ENCODE measurements at regions of chr12 and their contacts with region 1.

Region 1: GRCh38 chr12:7995266-7995963 is 37.1 kb upstream of the FOXJ2 start:
- DNase-seq: peak; percentile 73 to 91
- H3K4me3 ChIP-seq: no peak overlapping the region
- H3K27ac ChIP-seq: peak overlapping the region; percentile 10 to 77 (median 66)
- H3K4me1 ChIP-seq: peaks cover 0 to 34% (median 2%) of the 10 kb centered on the region in 4 donors
- H3K27me3 ChIP-seq: no peaks in the 10 kb centered on the region
- CTCF ChIP-seq: peak in 6 of 7 experiments; percentile 45 to 89 (median 81)
- EP300 ChIP-seq: no peak
- POLR2A ChIP-seq: no peak

Region 2: GRCh38 chr12:7583571-7583970 is 411.8 kb before region 1 on chr12:
- intact Hi-C with region 1: no loop called
- DNase-seq: no peak
- H3K4me3 ChIP-seq: no peak overlapping the region
- H3K27ac ChIP-seq: no peak overlapping the region
- H3K4me1 ChIP-seq: no peaks in the 10 kb centered on the region
- H3K27me3 ChIP-seq: no peaks in the 10 kb centered on the region
- CTCF ChIP-seq: no peak
- EP300 ChIP-seq: no peak
- POLR2A ChIP-seq: no peak

Region 3: GRCh38 chr12:7758758-7759140 is 236.7 kb before region 1 on chr12:
- intact Hi-C with region 1: no loop called
- DNase-seq: no peak
- H3K4me3 ChIP-seq: no peak overlapping the region
- H3K27ac ChIP-seq: no peak overlapping the region
- H3K4me1 ChIP-seq: no peaks in the 10 kb centered on the region
- H3K27me3 ChIP-seq: no peaks in the 10 kb centered on the region
- CTCF ChIP-seq: no peak
- EP300 ChIP-seq: no peak
- POLR2A ChIP-seq: no peak

Region 4: GRCh38 chr12:7869127-7869526 is 126.3 kb before region 1 on chr12:
- intact Hi-C with region 1: loop called (anchors 10 kb)
- DNase-seq: no peak
- H3K4me3 ChIP-seq: no peak overlapping the region
- H3K27ac ChIP-seq: no peak overlapping the region
- H3K4me1 ChIP-seq: peaks cover 0 to 6% (median 3%) of the 10 kb centered on the region in 4 donors
- H3K27me3 ChIP-seq: peaks cover 0 to 31% (median 12%) of the 10 kb centered on the region in 3 donors
- CTCF ChIP-seq: no peak
- EP300 ChIP-seq: no peak
- POLR2A ChIP-seq: no peak

Region 5: DNA sequence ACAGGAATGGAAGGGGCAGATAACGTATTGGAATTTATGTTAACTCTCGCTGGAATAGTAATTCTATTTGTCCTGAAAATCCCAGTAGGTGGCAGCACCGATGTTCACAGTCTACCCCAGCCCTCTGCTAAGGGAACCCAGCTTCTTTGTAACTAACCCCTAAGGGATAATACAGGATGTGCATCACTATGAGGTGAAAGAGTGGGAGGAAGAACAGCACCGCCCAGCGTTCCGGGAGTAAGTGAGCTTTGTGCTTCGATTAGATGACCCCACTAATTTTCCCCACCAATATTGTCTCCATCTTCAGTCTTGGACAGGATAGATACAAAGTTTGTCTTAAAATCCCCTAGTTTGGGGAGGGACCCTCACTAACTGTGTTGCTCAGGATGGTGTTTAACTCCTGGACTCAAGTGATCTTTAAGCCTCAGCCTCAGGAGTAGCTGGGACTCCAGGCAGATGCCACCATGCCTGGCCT is 62.1 kb before region 1 on chr12:
- intact Hi-C with region 1: loop called (anchors 5 kb)
- DNase-seq: peak; percentile 57 to 94
- H3K4me3 ChIP-seq: peak overlapping the region in 3 of 4 donors; percentile 44 to 66 (median 57)
- H3K27ac ChIP-seq: peak overlapping the region; percentile 50 to 88 (median 82)
- H3K4me1 ChIP-seq: peaks cover 0 to 42% (median 8%) of the 10 kb centered on the region in 4 donors
- H3K27me3 ChIP-seq: no peaks in the 10 kb centered on the region
- CTCF ChIP-seq: peak in 5 of 7 experiments; percentile 37 to 67 (median 60)
- EP300 ChIP-seq: no peak
- POLR2A ChIP-seq: no peak

Region 6: GRCh38 chr12:7959701-7960121 is 35.7 kb before region 1 on chr12:
- intact Hi-C with region 1: no loop called
- DNase-seq: peak in 1 of 2 donors; percentile 52
- H3K4me3 ChIP-seq: peak overlapping the region in 1 of 4 donors; percentile 37
- H3K27ac ChIP-seq: peak overlapping the region in 4 of 5 donors; percentile 25 to 86 (median 76)
- H3K4me1 ChIP-seq: peaks cover 0 to 26% (median 10%) of the 10 kb centered on the region in 4 donors
- H3K27me3 ChIP-seq: no peaks in the 10 kb centered on the region
- CTCF ChIP-seq: no peak
- EP300 ChIP-seq: no peak
- POLR2A ChIP-seq: no peak